ENCODE measurements at regions of chr10 and their contacts with region 1.

Region 1: GRCh38 chr10:86399879-86400704 is 33.5 kb upstream of the GRID1 start:
- DNase-seq: peak; percentile 98 to 99
- ATAC-seq: peak; percentile 96
- H3K4me3 ChIP-seq: peak overlapping the region; percentile 38 to 54
- H3K27ac ChIP-seq: peak overlapping the region; percentile 15 to 74
- H3K4me1 ChIP-seq: peaks cover 0 to 2% of the 10 kb centered on the region in 2 donors
- H3K27me3 ChIP-seq: no peaks in the 10 kb centered on the region

Region 2: DNA sequence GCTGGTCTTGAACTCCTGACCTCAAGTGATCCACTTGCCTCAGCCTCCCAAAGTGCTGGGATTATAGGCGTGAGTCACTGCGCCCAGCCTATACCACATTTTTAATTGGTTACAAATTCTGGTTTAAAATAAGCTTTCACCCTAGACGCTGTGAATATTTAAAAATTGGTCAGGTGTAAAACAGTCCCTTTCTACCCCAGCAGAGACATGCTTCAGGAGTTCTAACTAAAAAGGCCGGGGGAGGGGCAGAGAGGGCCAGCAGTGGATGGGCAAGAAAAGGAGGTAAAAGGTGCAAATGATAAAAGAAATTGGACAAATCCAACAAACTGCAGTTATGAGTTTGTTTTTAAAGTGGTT is 51.5 kb after region 1 on chr10:
- intact Hi-C with region 1: loop called (anchors 5 to 10 kb)
- DNase-seq: no peak
- ATAC-seq: no peak
- H3K4me3 ChIP-seq: no peak overlapping the region
- H3K27ac ChIP-seq: no peak overlapping the region
- H3K4me1 ChIP-seq: no peaks in the 10 kb centered on the region
- H3K27me3 ChIP-seq: no peaks in the 10 kb centered on the region

Region 3: GRCh38 chr10:86521678-86522509 is 121.8 kb after region 1 on chr10 and contains the start of gene WAPL:
- intact Hi-C with region 1: loop called in 1 of 2 experiments (anchors 5 kb)
- DNase-seq: peak; percentile 97 to 99
- ATAC-seq: peak; percentile 100
- H3K4me3 ChIP-seq: peak within 1 kb of the TSS; percentile 77 to 84
- H3K27ac ChIP-seq: peak within 1 kb of the TSS; percentile 87 to 99
- H3K4me1 ChIP-seq: no peaks in the 10 kb centered on the region
- H3K27me3 ChIP-seq: no peaks in the 10 kb centered on the region
- total RNA-seq, gene WAPL: 34.1 to 37.3 TPM

Region 4: GRCh38 chr10:86585037-86585725 is 185.1 kb after region 1 on chr10:
- intact Hi-C with region 1: loop called (anchors 1 to 5 kb)
- DNase-seq: peak; percentile 77 to 90
- ATAC-seq: peak; percentile 92
- H3K4me3 ChIP-seq: no peak overlapping the region
- H3K27ac ChIP-seq: no peak overlapping the region
- H3K4me1 ChIP-seq: no peaks in the 10 kb centered on the region
- H3K27me3 ChIP-seq: no peaks in the 10 kb centered on the region

Region 5: DNA sequence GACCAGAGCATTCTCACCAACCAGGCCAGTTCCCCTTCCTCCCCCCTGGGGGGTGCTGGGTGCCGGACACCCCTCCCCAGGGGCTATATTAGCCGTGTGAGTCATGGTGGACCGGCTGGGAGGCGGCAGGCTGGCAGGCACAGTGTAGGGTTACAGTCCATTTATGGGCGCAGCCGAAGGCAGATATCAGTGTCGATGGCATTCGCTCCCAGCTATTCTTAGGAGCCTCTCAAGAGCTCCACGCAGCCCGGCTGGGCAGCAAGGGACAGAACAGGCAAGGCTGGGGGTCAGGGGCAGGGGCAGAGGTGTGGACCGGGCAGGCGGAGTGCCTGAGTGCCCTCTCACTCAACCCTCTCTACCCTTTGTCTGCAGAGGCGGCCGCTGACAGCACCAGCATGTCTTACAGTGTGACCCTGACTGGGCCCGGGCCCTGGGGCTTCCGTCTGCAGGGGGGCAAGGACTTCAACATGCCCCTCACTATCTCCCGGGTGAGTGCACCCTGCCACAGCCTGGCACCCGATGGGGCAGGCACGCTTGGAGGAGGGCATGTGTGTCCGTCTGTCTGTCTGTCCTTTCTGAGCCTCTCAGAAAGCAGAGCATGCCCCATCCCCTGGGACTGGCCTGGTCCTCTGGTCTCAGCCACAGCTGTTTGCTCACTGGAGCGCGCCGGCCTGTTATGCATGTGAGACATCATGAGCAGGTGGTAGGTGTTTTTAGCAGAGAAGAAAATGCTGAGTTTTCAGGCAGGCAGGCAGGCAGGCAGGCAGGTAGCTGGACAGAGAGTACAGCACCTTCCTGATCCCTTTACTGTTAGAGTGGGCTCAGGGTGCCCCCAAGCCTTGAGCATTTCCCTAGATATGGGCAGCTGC is 268.4 kb after region 1 on chr10 and contains the start of gene LDB3:
- intact Hi-C with region 1: loop called in 1 of 2 experiments (anchors 5 kb)
- DNase-seq: peak; percentile 85 to 92
- ATAC-seq: peak; percentile 82
- H3K4me3 ChIP-seq: peak within 1 kb of the TSS; percentile 33 to 35
- H3K27ac ChIP-seq: peak within 1 kb of the TSS; percentile 85 to 93
- H3K4me1 ChIP-seq: peaks cover 3 to 6% of the 10 kb centered on the region in 2 donors
- H3K27me3 ChIP-seq: no peaks in the 10 kb centered on the region
- total RNA-seq, gene LDB3: 67.9 to 132 TPM

Region 6: DNA sequence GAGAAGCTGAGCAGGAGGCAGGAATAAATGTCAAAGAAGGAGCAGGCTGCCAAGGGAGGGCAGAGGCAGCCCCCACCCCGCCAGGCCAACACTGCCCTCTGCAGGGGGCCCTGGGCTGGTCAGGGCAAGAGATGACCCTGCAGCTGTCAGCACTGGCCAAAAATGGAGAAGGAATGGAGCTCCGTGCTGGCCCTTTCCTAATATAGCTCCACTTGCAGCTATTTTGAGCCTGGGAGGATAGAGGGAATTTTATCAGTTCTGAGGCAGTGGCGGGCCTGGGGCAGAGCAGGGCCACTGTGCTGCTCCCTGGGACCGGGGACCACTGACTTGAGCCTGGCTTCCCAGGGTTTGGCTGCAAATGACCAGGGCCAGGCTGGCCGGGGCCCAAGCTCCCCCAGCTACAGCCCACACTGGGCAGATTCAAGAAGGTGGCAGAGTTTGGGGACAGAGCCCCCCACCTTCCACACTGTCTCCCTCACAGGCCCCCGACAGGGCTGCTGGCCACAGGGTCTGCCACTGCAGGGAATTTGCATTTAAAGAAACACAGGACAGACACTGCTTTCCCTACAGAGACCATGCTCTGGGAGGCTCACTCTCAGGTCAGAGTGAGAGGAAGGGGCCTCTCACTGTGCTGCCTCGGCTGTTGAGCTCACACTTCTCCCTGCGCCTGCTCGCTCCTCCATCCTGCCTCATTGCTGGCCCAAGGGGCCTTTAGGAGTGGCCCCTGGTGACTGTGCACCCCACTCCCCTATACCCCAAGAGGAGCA is 284.4 kb after region 1 on chr10:
- intact Hi-C with region 1: loop called in 1 of 2 experiments (anchors 5 kb)
- DNase-seq: peak; percentile 77 to 87
- ATAC-seq: peak; percentile 70
- H3K4me3 ChIP-seq: no peak overlapping the region
- H3K27ac ChIP-seq: peak overlapping the region; percentile 51 to 70
- H3K4me1 ChIP-seq: peaks cover 0 to 5% of the 10 kb centered on the region in 2 donors
- H3K27me3 ChIP-seq: no peaks in the 10 kb centered on the region